ENCODE measurements at regions of chr5 and their contacts with region 1.

Region 1: DNA sequence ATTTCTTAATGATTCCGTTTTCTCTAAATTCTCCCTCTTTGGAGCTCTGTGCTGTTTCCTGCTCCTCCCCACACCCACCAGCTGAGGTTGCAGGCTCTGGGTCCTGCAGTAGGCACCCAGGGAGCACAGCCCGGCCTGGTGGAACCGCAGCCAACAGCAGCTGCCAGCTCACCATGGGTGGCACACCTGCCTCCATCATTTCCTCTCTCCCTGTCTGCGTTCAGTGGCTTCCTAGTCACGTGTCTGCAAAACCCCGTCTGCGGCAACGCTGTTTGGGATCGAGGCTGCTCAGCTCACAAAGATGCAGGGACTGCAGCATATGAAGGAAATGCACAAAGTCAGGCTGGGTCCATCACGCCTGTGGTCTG is 367.8 kb downstream of the IRX2 start:
- DNase-seq: no peak
- H3K4me3 ChIP-seq: no peak overlapping the region
- H3K27ac ChIP-seq: no peak overlapping the region
- H3K4me1 ChIP-seq: no peaks in the 10 kb centered on the region
- H3K27me3 ChIP-seq: no peaks in the 10 kb centered on the region
- CTCF ChIP-seq: no peak

Region 2: DNA sequence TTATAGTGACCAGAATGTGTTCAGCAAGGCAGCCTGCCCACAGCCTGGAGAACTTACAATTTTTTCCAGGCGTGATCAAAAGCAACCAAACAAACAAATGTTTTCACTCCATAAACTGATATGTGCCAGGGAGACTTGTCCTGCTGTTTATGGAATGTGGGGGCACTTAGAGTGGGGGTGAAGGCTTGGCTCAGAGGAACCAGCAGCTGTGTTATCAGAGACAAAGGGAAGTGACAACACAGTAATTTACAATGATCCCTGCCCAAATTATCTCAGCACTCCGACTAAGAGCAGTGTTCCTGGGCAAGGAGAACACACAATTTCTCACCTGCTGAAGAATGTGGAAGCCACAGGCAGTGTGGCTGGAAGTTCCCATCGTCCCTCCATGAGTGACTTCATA is 71.8 kb before region 1 on chr5:
- CTCF ChIA-PET with region 1: no interaction called
- dilution Hi-C with region 1: loop called (anchors 5 kb)
- in situ Hi-C with region 1: no loop called
- intact Hi-C with region 1: no loop called
- DNase-seq: no peak
- H3K4me3 ChIP-seq: no peak overlapping the region
- H3K27ac ChIP-seq: no peak overlapping the region
- H3K4me1 ChIP-seq: no peaks in the 10 kb centered on the region
- H3K27me3 ChIP-seq: no peaks in the 10 kb centered on the region
- CTCF ChIP-seq: no peak

Region 3: DNA sequence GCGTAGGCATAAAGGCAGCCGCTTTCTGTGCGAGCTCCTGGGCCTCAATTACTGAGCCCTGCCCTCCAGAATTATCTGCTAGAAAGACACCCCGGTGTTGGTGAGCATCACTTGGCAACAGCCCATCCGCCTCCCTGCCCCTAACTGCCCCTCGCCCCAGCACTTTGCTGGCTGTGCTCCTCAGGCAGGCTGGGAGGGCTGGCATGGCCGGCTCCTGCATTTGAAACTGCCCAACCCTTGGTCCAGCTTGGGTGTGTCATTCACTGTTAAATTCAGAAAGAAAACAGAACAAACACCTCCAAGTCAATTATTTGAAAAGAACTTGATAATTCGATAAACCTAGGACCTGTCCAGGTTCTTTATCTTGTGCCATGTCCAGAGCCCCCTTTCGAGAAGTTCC is 33.6 kb after region 1 on chr5:
- CTCF ChIA-PET with region 1: no interaction called
- dilution Hi-C with region 1: no loop called
- in situ Hi-C with region 1: no loop called
- intact Hi-C with region 1: no loop called
- DNase-seq: no peak
- H3K4me3 ChIP-seq: no peak overlapping the region
- H3K27ac ChIP-seq: no peak overlapping the region
- H3K4me1 ChIP-seq: no peaks in the 10 kb centered on the region
- H3K27me3 ChIP-seq: no peaks in the 10 kb centered on the region
- CTCF ChIP-seq: no peak

Region 4: GRCh38 chr5:2569176-2570157 is 185.8 kb after region 1 on chr5:
- CTCF ChIA-PET with region 1: no interaction called
- dilution Hi-C with region 1: no loop called
- in situ Hi-C with region 1: no loop called
- intact Hi-C with region 1: no loop called
- DNase-seq: no peak
- H3K4me3 ChIP-seq: no peak overlapping the region
- H3K27ac ChIP-seq: no peak overlapping the region
- H3K4me1 ChIP-seq: no peaks in the 10 kb centered on the region
- H3K27me3 ChIP-seq: no peaks in the 10 kb centered on the region
- CTCF ChIP-seq: no peak

Measured in mammary epithelial cell (primary cell).